Heart right ventricle (tissue), 16 donors: ENCODE measurements at regions of chr19 and their contacts with region 1.

Region 1: GRCh38 chr19:34269968-34270621 is 15.7 kb downstream of the GARRE1 start:
- DNase-seq: peak; percentile 57 to 79
- ATAC-seq: peak; percentile 86 to 91 (median 88)
- H3K4me3 ChIP-seq: peak overlapping the region in 7 of 10 donors; percentile 4 to 55 (median 31)
- H3K27ac ChIP-seq: peak overlapping the region; percentile 55 to 94 (median 88)
- H3K4me1 ChIP-seq: peaks cover 7 to 93% (median 64%) of the 10 kb centered on the region in 9 donors
- H3K27me3 ChIP-seq: no peaks in the 10 kb centered on the region
- CTCF ChIP-seq: no peak

Region 2: GRCh38 chr19:34232566-34233481 is 37.3 kb before region 1 on chr19:
- intact Hi-C with region 1: no loop called
- DNase-seq: peak; percentile 54 to 57
- ATAC-seq: peak; percentile 30 to 81 (median 72)
- H3K4me3 ChIP-seq: no peak overlapping the region
- H3K27ac ChIP-seq: peak overlapping the region in 8 of 10 donors; percentile 9 to 75 (median 48)
- H3K4me1 ChIP-seq: peaks cover 4 to 31% (median 18%) of the 10 kb centered on the region in 9 donors
- H3K27me3 ChIP-seq: no peaks in the 10 kb centered on the region
- CTCF ChIP-seq: no peak

Region 3: DNA sequence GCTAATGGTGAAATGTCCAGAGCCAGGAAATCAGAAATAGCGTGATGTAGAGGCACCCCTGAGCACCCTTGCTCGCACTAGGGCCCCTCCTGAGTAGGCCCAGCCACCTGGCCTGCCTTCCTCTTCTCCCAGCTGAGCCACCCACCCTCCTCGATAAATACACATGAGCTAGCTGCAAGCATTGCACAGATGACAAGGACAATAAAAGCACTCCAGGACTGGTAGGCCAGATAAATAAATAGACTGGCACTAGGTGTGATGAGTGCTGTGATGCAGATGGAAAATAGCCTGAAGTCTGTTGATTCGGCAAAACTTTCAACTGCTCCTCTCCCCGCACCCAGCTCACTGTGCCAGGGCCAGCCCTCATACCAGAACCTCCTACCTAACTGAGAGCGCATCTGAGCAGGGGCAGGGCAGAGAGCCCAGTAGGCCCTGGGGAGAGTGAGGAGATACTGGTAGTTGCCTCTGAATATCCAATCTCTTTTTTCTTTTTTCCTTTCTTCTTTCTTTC is 40.4 kb after region 1 on chr19:
- intact Hi-C with region 1: loop called in 3 of 10 experiments (anchors 5 kb)
- DNase-seq: no peak
- ATAC-seq: peak in 2 of 8 donors; percentile 33 to 53
- H3K4me3 ChIP-seq: no peak overlapping the region
- H3K27ac ChIP-seq: peak overlapping the region in 2 of 10 donors; percentile 33 to 49
- H3K4me1 ChIP-seq: peaks cover 12 to 89% (median 49%) of the 10 kb centered on the region in 9 donors
- H3K27me3 ChIP-seq: no peaks in the 10 kb centered on the region
- CTCF ChIP-seq: no peak

Region 4: GRCh38 chr19:34317311-34317927 is 47.3 kb after region 1 on chr19:
- intact Hi-C with region 1: loop called in 3 of 10 experiments (anchors 5 to 10 kb)
- DNase-seq: peak in 1 of 2 donors; percentile 33
- ATAC-seq: peak; percentile 54 to 79 (median 70)
- H3K4me3 ChIP-seq: no peak overlapping the region
- H3K27ac ChIP-seq: peak overlapping the region; percentile 45 to 83 (median 63)
- H3K4me1 ChIP-seq: peaks cover 19 to 84% (median 53%) of the 10 kb centered on the region in 9 donors
- H3K27me3 ChIP-seq: no peaks in the 10 kb centered on the region
- CTCF ChIP-seq: no peak